ENCODE measurements at regions of chr1 and their contacts with region 1.

Region 1: GRCh38 chr1:54944610-54945544 is 35.6 kb upstream of the TMEM61 start:
- DNase-seq: peak; percentile 74 to 80 (median 77)
- H3K4me3 ChIP-seq: peak overlapping the region in 1 of 3 experiments; percentile 17
- H3K4me3 Mint-ChIP-seq: peak overlapping the region in 1 of 2 donors; percentile 68
- H3K27ac ChIP-seq: peak overlapping the region in 1 of 2 donors; percentile 41
- H3K27ac Mint-ChIP-seq: peak overlapping the region in 2 of 7 donors; percentile 43 to 58
- H3K4me1 ChIP-seq: peaks cover 41 to 52% of the 10 kb centered on the region in 2 donors
- H3K4me1 Mint-ChIP-seq: peaks cover 43% of the 10 kb centered on the region
- H3K27me3 ChIP-seq: no peaks in the 10 kb centered on the region
- H3K27me3 Mint-ChIP-seq: peaks cover 0 to 2% (median 2%) of the 10 kb centered on the region in 3 donors
- CTCF ChIP-seq: peak; percentile 91

Region 2: DNA sequence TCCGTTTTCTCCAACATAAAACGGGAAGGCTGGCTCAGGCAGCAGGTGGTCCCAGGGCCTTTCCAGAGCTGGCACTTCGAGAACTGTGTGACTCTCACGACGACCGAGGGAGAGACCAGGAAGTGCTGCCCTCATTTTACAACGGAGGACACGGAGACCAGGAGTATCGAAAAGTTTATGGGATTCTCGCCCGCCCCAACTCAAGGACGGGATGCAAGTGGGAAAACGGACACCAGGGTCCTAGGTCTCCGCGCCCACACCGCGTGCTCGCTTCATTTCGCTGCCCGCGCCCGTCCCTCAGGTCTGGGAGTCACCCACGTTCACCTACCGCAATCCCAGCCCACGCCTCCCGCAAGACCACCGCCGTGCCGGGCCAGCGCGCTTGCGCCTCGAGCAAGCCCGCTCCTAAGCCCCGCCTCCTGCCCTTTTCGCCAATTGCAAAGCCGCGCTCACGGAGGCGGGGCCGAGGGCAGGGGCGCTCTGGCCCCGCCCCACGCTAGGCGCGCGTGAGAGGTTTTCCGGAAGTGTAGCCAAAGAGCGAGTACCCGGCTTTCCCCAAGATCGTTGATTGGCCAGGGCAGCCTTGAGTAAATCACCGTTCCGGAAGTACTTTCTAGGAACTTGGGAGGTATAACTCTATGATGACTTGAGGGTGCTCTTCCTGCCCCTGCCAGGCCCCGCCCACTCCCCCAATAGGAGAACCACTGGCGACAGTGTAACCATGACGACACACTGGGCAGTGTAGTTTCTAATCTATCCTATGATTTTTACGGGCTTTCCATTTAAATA is 180.6 kb before region 1 on chr1 and contains the start of gene PARS2:
- intact Hi-C with region 1: no loop called
- DNase-seq: peak; percentile 99
- H3K4me3 ChIP-seq: peak within 1 kb of the TSS; percentile 90 to 96 (median 91)
- H3K4me3 Mint-ChIP-seq: peak within 1 kb of the TSS; percentile 90 to 96
- H3K27ac ChIP-seq: peak within 1 kb of the TSS in 1 of 2 donors; percentile 88
- H3K27ac Mint-ChIP-seq: peak within 1 kb of the TSS; percentile 80 to 94 (median 90)
- H3K4me1 ChIP-seq: peaks cover 10 to 17% of the 10 kb centered on the region in 2 donors
- H3K4me1 Mint-ChIP-seq: peaks cover 19% of the 10 kb centered on the region
- H3K27me3 ChIP-seq: no peaks in the 10 kb centered on the region
- H3K27me3 Mint-ChIP-seq: peaks cover 0 to 1% (median 0%) of the 10 kb centered on the region in 3 donors
- CTCF ChIP-seq: no peak
- polyA plus RNA-seq, gene PARS2: 0.73 to 1.2 (median 0.92) TPM

Region 3: GRCh38 chr1:55021965-55022546 is 77.2 kb after region 1 on chr1:
- intact Hi-C with region 1: loop called in 1 of 2 experiments (anchors 2 kb)
- DNase-seq: peak; percentile 65 to 72 (median 70)
- H3K4me3 ChIP-seq: no peak overlapping the region
- H3K4me3 Mint-ChIP-seq: no peak overlapping the region
- H3K27ac ChIP-seq: no peak overlapping the region
- H3K27ac Mint-ChIP-seq: peak overlapping the region in 4 of 7 donors; percentile 37 to 82 (median 69)
- H3K4me1 ChIP-seq: peaks cover 4 to 7% of the 10 kb centered on the region in 2 donors
- H3K4me1 Mint-ChIP-seq: peaks cover 35% of the 10 kb centered on the region
- H3K27me3 ChIP-seq: no peaks in the 10 kb centered on the region
- H3K27me3 Mint-ChIP-seq: peaks cover 2 to 7% (median 5%) of the 10 kb centered on the region in 3 donors
- CTCF ChIP-seq: peak; percentile 87

Measured in CD14-positive monocyte (primary cell).